Heart right ventricle (tissue), 16 donors: ENCODE measurements at regions of chr2 and their contacts with region 1.

Region 1: DNA sequence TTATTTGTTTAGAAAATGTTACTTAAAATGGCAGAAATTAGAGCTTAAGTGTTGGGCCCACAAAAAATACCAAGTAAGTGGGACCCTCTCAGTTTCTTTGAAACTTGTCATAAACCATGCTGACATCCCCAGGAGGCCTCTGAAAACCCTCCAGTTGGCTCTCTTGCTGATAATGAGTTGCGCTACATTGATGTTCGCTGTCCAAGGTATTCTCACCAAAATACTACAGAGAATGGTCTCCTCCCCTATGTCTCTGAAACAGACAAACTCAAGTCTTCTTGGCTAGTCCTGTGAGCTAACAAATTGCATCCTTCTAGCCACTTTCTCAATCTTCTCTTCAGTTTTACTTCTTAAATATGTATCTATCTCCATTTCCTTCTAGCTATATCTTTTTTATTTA is 669.4 kb downstream of the IRS1 start:
- DNase-seq: no peak
- ATAC-seq: peak in 1 of 8 donors; percentile 32
- H3K4me3 ChIP-seq: no peak overlapping the region
- H3K27ac ChIP-seq: no peak overlapping the region
- H3K4me1 ChIP-seq: peaks cover 0 to 16% (median 10%) of the 10 kb centered on the region in 9 donors
- H3K27me3 ChIP-seq: no peaks in the 10 kb centered on the region
- CTCF ChIP-seq: no peak

Region 2: GRCh38 chr2:226151132-226151531 is 20.9 kb after region 1 on chr2:
- intact Hi-C with region 1: loop called in 1 of 10 experiments (anchors 2 kb)
- DNase-seq: no peak
- ATAC-seq: peak in 4 of 8 donors; percentile 59 to 87 (median 72)
- H3K4me3 ChIP-seq: no peak overlapping the region
- H3K27ac ChIP-seq: no peak overlapping the region
- H3K4me1 ChIP-seq: peaks cover 0 to 8% (median 0%) of the 10 kb centered on the region in 9 donors
- H3K27me3 ChIP-seq: no peaks in the 10 kb centered on the region
- CTCF ChIP-seq: no peak

Region 3: GRCh38 chr2:226198956-226199355 is 68.8 kb after region 1 on chr2:
- intact Hi-C with region 1: no loop called
- DNase-seq: no peak
- ATAC-seq: peak in 1 of 8 donors; percentile 27
- H3K4me3 ChIP-seq: no peak overlapping the region
- H3K27ac ChIP-seq: no peak overlapping the region
- H3K4me1 ChIP-seq: no peaks in the 10 kb centered on the region
- H3K27me3 ChIP-seq: no peaks in the 10 kb centered on the region
- CTCF ChIP-seq: no peak

Region 4: GRCh38 chr2:226387499-226387942 is 257.3 kb after region 1 on chr2:
- intact Hi-C with region 1: no loop called
- DNase-seq: no peak
- ATAC-seq: no peak
- H3K4me3 ChIP-seq: no peak overlapping the region
- H3K27ac ChIP-seq: no peak overlapping the region
- H3K4me1 ChIP-seq: no peaks in the 10 kb centered on the region
- H3K27me3 ChIP-seq: no peaks in the 10 kb centered on the region
- CTCF ChIP-seq: no peak